T-cell (primary cell): ENCODE measurements at regions of chr10 and their contacts with region 1.

Region 1: GRCh38 chr10:6530211-6530840 is 49.8 kb downstream of the PRKCQ start:
- DNase-seq: peak; percentile 62 to 90 (median 81)
- ATAC-seq: peak; percentile 96 to 98 (median 97)
- H3K4me3 ChIP-seq: peak overlapping the region; percentile 31 to 42
- H3K4me3 Mint-ChIP-seq: peak overlapping the region; percentile 83 to 90 (median 83)
- H3K27ac ChIP-seq: peak overlapping the region; percentile 86
- H3K27ac Mint-ChIP-seq: peak overlapping the region; percentile 99 to 100
- H3K4me1 ChIP-seq: peaks cover 38 to 68% of the 10 kb centered on the region in 2 experiments
- H3K4me1 Mint-ChIP-seq: peaks cover 91 to 93% (median 93%) of the 10 kb centered on the region in 3 donors
- H3K27me3 ChIP-seq: no peaks in the 10 kb centered on the region
- H3K27me3 Mint-ChIP-seq: no peaks in the 10 kb centered on the region

Region 2: DNA sequence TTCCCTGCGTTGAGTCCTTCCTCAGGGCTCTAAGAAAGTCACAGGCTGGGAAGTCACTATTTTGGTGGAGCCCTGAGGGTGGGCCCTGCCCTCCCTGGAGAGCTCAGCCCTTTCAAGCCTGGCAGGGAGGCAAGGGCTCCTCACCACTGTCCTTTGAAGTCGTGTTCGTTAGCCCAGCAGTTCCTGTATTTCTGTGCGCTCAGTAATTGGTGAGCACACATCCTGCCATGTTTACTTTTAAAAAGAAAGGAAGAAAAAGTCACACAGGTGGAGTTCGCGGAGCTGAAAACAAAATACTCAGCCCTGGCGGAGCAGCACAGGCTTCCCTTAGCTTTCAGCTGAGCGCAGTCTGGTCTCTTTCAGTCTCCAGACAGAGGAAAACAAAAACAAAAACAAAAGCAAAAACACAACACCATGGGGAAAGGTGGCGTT is 12.7 kb after region 1 on chr10:
- CTCF ChIA-PET with region 1: interaction called, 5 to 19 read pairs
- POLR2A ChIA-PET with region 1: interaction called, 3 to 6 read pairs
- DNase-seq: peak in 34 of 35 experiments; percentile 30 to 82 (median 60)
- ATAC-seq: peak; percentile 87 to 91 (median 88)
- H3K4me3 ChIP-seq: peak overlapping the region; percentile 30 to 50
- H3K4me3 Mint-ChIP-seq: peak overlapping the region; percentile 77 to 90 (median 86)
- H3K27ac ChIP-seq: peak overlapping the region; percentile 84
- H3K27ac Mint-ChIP-seq: peak overlapping the region; percentile 100
- H3K4me1 ChIP-seq: peaks cover 39 to 67% of the 10 kb centered on the region in 2 experiments
- H3K4me1 Mint-ChIP-seq: peaks cover 81 to 88% (median 86%) of the 10 kb centered on the region in 3 donors
- H3K27me3 ChIP-seq: no peaks in the 10 kb centered on the region
- H3K27me3 Mint-ChIP-seq: no peaks in the 10 kb centered on the region